HEK293T (cell line): ENCODE measurements at regions of chr14 and their contacts with region 1.

Region 1: GRCh38 chr14:73058224-73058921 is at the start of gene RBM25:
- DNase-seq: peak; percentile 94

Region 2: DNA sequence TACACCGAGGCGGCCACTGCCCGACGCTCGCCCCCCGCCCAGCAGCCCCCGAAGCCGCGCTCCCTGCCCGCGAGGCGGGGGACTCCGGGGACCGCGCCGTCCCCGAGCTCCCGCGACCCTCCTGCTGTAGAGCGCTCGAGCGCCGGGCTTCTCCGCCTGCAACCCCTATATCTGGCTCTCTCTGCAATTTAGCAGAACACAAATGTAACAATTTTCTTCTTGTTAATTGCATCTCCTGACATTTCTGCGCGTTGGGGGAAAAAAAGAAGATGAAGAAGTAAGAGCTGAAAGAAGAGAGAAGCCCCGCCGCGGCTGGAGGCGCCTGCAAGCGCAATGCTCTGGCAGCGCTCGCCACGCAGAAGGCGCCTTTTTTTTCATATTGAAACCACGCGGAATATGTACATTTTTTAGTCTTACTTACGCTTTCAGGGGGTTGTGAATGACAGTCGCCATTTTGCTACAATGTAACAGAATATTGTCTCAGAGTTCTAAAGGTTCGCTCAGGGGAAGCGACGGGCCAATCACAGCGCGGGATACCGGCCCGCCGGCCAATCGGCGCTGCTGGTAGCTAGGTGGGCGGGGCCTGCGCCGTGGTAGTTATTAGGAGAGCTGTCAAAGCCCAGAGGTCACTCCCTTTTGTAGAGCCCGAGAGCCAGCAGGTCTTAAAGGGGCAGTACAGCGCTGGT is 164.6 kb before region 1 on chr14 and contains the start of gene DPF3:
- CTCF ChIA-PET with region 1: no interaction called
- POLR2A ChIA-PET with region 1: no interaction called
- DNase-seq: peak; percentile 94

Region 3: GRCh38 chr14:73026845-73027542 is 31.4 kb before region 1 on chr14 and contains the start of gene ZFYVE1:
- CTCF ChIA-PET with region 1: no interaction called
- POLR2A ChIA-PET with region 1: interaction called, 19 read pairs
- DNase-seq: peak; percentile 93

Region 4: GRCh38 chr14:73069585-73069984 is 11.2 kb after region 1 on chr14:
- CTCF ChIA-PET with region 1: no interaction called
- POLR2A ChIA-PET with region 1: interaction called, 17 read pairs
- DNase-seq: no peak

Region 5: DNA sequence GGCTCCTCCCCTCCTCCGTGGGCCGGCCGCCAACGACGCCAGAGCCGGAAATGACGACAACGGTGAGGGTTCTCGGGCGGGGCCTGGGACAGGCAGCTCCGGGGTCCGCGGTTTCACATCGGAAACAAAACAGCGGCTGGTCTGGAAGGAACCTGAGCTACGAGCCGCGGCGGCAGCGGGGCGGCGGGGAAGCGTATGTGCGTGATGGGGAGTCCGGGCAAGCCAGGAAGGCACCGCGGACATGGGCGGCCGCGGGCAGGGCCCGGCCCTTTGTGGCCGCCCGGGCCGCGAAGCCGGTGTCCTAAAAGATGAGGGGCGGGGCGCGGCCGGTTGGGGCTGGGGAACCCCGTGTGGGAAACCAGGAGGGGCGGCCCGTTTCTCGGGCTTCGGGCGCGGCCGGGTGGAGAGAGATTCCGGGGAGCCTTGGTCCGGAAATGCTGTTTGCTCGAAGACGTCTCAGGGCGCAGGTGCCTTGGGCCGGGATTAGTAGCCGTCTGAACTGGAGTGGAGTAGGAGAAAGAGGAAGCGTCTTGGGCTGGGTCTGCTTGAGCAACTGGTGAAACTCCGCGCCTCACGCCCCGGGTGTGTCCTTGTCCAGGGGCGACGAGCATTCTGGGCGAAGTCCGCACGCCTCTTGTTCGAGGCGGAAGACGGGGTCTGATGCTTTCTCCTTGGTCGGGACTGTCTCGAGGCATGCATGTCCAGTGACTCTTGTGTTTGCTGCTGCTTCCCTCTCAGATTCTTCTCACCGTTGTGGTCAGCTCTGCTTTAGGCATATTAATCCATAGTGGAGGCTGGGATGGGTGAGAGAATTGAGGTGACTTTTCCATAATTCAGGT is 78.2 kb after region 1 on chr14 and contains the start of gene PSEN1:
- CTCF ChIA-PET with region 1: no interaction called
- POLR2A ChIA-PET with region 1: interaction called, 20 read pairs
- DNase-seq: peak; percentile 98

Region 6: DNA sequence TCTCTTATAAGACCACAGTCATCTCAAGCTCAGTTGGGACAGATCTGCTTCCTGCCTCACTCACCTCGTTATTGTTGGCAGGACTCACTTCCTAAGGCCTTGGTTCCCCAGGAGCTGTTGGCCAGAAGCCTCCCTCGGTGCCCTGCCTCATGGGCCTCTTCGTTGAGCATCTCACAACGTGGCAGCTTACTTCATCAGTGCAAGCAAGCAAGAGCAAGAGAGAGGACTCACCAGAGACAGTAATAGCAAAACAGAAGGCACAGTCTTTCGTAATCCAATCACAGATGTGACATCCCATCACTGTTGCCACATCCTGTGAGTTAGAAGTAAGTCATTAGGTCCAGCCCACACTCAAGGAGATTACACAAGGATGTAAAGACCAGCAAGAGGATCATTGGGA is 405.0 kb after region 1 on chr14:
- CTCF ChIA-PET with region 1: no interaction called
- POLR2A ChIA-PET with region 1: interaction called, 10 read pairs
- DNase-seq: no peak